Gastrocnemius medialis (tissue), 4 donors: ENCODE measurements at regions of chr2 and their contacts with region 1.

Region 1: DNA sequence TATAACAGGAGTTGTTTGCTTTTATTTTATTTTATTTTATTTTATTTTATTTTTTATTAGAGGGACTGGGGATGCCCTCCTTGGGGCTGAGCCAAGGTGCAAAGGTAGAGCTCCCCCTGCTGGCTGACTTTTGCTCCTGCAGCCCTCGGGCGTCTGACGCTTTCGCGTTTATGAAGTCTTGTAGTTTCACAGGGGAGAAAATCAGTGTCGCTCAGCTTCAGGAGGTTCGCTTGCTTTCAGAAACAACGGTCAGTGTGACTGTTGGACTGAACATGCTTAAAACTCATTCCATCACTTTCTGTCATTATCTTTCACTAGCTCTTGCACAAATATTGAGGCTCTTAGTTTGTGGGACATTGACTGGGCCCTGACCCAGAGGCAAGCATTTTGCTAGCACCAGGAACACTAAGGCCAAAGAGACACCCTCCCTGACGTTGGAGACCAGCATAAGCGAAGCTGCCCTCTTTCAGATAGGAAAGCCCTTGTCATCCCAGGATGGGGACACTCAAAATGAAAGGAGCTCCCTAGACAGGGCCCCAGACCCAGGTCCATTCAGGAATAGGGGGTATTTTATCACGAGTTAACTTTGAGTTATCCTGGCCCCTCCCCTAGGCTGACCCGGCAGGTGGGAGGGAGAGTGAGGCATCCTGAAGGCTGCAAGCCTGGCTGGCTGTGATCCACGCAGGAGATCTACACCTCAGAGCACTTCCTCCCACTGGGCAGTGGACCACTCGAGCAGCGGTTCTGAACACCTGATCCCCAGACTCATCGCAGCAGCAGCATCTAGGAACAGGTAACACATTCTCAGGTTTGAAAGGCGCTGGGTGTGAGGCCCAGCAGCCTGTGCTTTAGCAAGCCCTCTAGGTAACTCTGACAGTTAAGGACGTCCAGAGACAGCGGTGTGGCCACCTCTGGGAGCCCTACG is 34.4 kb downstream of the LGALSL start:
- DNase-seq: peak in 1 of 2 donors; percentile 38
- ATAC-seq: peak in 1 of 2 donors; percentile 83
- H3K4me3 ChIP-seq: no peak overlapping the region
- H3K27ac ChIP-seq: no peak overlapping the region
- H3K4me1 ChIP-seq: peaks cover 5 to 17% of the 10 kb centered on the region in 2 donors
- H3K27me3 ChIP-seq: no peaks in the 10 kb centered on the region
- CTCF ChIP-seq: peak; percentile 83 to 98 (median 92)
- POLR2A ChIP-seq: no peak

Region 2: DNA sequence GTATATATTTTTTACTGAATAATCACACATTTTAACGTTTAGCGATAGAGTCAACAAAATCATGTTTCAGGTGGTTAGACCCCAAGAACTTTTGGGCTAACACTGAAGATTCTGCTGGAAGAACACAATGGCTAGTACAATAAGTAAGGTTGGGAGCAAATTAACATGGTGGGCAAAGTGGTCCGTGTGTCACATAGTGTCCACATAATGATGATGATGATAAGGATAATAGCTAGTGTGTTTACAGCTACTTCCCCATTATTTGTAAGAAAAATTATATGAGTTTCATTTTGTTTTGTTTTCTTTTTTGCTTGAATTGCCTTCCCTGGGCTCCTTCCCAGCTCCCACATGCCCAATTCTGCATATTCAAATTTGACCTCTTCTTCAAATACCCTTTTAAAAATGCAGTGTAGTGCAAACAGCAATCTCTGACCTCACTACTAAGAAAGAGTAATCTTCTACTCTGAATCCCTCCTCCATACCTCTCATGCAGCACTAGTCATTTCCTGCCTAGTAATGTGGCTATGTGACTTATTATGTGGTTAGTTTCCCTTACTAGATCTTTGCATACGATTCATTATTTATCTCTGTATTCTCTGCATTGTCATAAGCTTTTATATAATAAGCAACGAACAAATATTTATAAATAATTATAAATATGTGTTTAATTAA is 452.1 kb before region 1 on chr2:
- in situ Hi-C with region 1: loop called in 2 of 4 experiments (anchors 25 kb)
- intact Hi-C with region 1: no loop called
- DNase-seq: no peak
- ATAC-seq: no peak
- H3K4me3 ChIP-seq: no peak overlapping the region
- H3K27ac ChIP-seq: no peak overlapping the region
- H3K4me1 ChIP-seq: peaks cover 0 to 6% of the 10 kb centered on the region in 2 donors
- H3K27me3 ChIP-seq: no peaks in the 10 kb centered on the region
- CTCF ChIP-seq: no peak
- POLR2A ChIP-seq: no peak

Region 3: GRCh38 chr2:64052468-64053241 is 435.7 kb before region 1 on chr2:
- in situ Hi-C with region 1: loop called (anchors 5 to 25 kb)
- intact Hi-C with region 1: no loop called
- DNase-seq: no peak
- ATAC-seq: peak; percentile 65 to 80
- H3K4me3 ChIP-seq: no peak overlapping the region
- H3K27ac ChIP-seq: peak overlapping the region; percentile 62 to 71 (median 67)
- H3K4me1 ChIP-seq: peaks cover 0 to 8% of the 10 kb centered on the region in 2 donors
- H3K27me3 ChIP-seq: no peaks in the 10 kb centered on the region
- CTCF ChIP-seq: no peak
- POLR2A ChIP-seq: peak in 1 of 2 donors; percentile 14

Region 4: GRCh38 chr2:64062829-64063228 is 425.5 kb before region 1 on chr2:
- in situ Hi-C with region 1: loop called in 1 of 4 experiments (anchors 25 kb)
- intact Hi-C with region 1: no loop called
- DNase-seq: no peak
- ATAC-seq: no peak
- H3K4me3 ChIP-seq: no peak overlapping the region
- H3K27ac ChIP-seq: peak overlapping the region in 1 of 4 donors; percentile 63
- H3K4me1 ChIP-seq: no peaks in the 10 kb centered on the region
- H3K27me3 ChIP-seq: no peaks in the 10 kb centered on the region
- CTCF ChIP-seq: no peak
- POLR2A ChIP-seq: no peak